HCT116 (cell line): ENCODE measurements at regions of chr2 and their contacts with region 1.

Region 1: DNA sequence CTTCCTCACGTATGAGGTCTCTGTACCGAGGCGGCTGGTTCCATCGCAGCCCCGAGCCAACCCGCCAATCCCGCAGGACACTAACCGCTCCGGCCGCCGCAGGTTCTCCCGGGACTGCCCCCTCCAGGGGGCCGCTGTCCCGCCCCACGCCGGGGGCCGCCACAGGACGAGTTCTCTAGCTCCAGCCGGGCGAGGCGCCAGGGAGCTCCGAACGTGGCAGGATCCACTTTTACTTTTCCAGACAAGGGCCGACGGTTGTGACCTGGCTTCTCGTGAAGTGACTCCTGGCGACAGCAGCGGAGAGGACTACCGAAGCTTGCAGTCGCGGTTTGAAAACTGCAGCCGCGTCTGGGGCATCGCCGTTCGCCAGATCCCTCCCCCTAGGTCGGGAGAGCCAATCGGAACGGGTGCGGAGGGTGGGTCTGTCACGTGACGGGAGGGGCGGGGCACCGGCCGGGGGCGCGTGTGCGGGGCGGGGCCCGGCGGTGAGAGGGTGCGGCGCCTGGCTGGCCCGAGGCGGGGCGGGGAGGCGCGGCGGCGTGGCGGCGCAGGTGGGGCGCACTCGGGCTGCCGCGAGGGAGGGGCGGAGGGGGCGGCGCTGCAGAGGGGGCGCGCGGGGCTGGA is at the start of gene STK17B:
- DNase-seq: peak; percentile 88
- ATAC-seq: peak; percentile 92
- H3K4me3 ChIP-seq: peak within 1 kb of the TSS; percentile 78 to 91
- H3K27ac ChIP-seq: peak within 1 kb of the TSS; percentile 70
- H3K4me1 ChIP-seq: peaks cover 4 to 26% of the 10 kb centered on the region in 2 experiments
- H3K27me3 ChIP-seq: 0 out of 2 replicates have a peak, but pooled peaks cover 5% of the 10 kb centered on the region
- CTCF ChIP-seq: no peak
- POLR2A ChIP-seq: peak; percentile 96
- RAD21 ChIP-seq: peak; percentile 19; the same call in 1 of the 2 replicates
- total RNA-seq, gene STK17B: 16.9 TPM

Region 2: DNA sequence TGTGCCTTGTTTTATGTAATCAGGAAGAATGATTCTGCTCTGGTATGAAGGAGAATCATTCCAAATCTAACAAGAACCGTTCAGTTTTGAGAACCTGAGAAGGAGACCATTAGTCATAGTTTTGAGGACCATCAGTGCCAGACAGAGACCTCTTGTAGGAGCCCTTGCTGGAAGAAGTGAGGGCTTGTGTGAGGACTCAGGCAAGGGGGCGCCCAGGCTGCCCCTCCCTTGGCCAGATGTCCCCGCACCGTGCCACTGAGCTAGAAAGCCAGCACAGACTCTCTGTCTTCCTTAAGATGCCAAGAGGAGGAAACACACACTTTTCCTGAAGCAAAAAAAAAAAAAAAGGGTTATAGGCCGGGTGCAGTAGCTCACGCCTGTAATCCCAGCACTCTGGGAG is 570.0 kb before region 1 on chr2:
- CTCF ChIA-PET with region 1: no interaction called
- POLR2A ChIA-PET with region 1: no interaction called
- RAD21 ChIA-PET with region 1: no interaction called
- intact Hi-C with region 1: no loop called
- DNase-seq: no peak
- ATAC-seq: no peak
- H3K4me3 ChIP-seq: no peak overlapping the region
- H3K27ac ChIP-seq: no peak overlapping the region
- H3K4me1 ChIP-seq: no peaks in the 10 kb centered on the region
- H3K27me3 ChIP-seq: no peaks in the 10 kb centered on the region
- CTCF ChIP-seq: no peak
- POLR2A ChIP-seq: no peak
- RAD21 ChIP-seq: no peak

Region 3: GRCh38 chr2:196233021-196233804 is 61.9 kb after region 1 on chr2:
- CTCF ChIA-PET with region 1: no interaction called
- POLR2A ChIA-PET with region 1: no interaction called
- RAD21 ChIA-PET with region 1: no interaction called
- intact Hi-C with region 1: loop called (anchors 2 kb)
- DNase-seq: peak; percentile 88
- ATAC-seq: peak; percentile 82
- H3K4me3 ChIP-seq: peak overlapping the region in 1 of 2 experiments; percentile 31; a peak in 2 of 4 replicates
- H3K27ac ChIP-seq: peak overlapping the region; percentile 55
- H3K4me1 ChIP-seq: peaks cover 26 to 34% of the 10 kb centered on the region in 2 experiments
- H3K27me3 ChIP-seq: no peaks in the 10 kb centered on the region
- CTCF ChIP-seq: no peak
- POLR2A ChIP-seq: no peak
- RAD21 ChIP-seq: peak; percentile 32; the same call in 1 of the 2 replicates